HEK293 (cell line): ENCODE measurements at regions of chr16 and their contacts with region 1.

Region 1: GRCh38 chr16:2919511-2920255 is 8.0 kb downstream of the FLYWCH1 start:
- H3K4me3 ChIP-seq: no peak overlapping the region
- H3K27ac ChIP-seq: no peak overlapping the region
- H3K4me1 ChIP-seq: 0 out of 2 replicates have a peak, but pooled peaks cover 4% of the 10 kb centered on the region
- CTCF ChIP-seq: peak; percentile 60; the same call in 1 of the 2 replicates

Region 2: DNA sequence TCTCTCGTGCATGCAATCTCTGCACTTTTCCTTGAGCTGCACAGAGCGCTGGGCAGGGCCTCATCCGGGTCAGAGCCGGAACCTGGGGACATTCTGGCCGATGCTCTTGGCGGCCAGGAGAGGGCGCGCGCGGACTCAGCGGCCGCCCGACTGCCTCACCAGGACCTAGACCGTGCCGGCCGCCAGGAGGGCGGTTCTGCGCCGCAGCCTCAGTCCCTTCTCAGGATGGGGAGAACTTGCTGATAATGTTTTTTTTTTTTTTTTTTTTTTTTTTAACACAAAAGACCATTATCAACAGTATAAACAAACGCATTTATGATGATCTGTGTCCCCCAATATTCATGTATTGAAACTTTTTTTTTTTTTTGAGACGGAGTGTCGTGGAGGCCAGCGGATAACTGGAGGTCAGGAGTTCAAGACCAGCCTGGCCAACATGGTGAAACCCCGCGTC is 44.7 kb before region 1 on chr16:
- CTCF ChIA-PET with region 1: interaction called, 31 read pairs
- POLR2A ChIA-PET with region 1: no interaction called
- H3K4me3 ChIP-seq: no peak overlapping the region
- H3K27ac ChIP-seq: no peak overlapping the region
- H3K4me1 ChIP-seq: no peaks in the 10 kb centered on the region; the same call in 1 of the 2 replicates
- CTCF ChIP-seq: peak; percentile 95

Region 3: GRCh38 chr16:3235856-3236669 is 316.4 kb after region 1 on chr16:
- CTCF ChIA-PET with region 1: no interaction called
- POLR2A ChIA-PET with region 1: no interaction called
- H3K4me3 ChIP-seq: no peak overlapping the region
- H3K27ac ChIP-seq: no peak overlapping the region
- H3K4me1 ChIP-seq: 0 out of 2 replicates have a peak, but pooled peaks cover 2% of the 10 kb centered on the region
- CTCF ChIP-seq: no peak